ENCODE measurements at regions of chr13 and their contacts with region 1.

Region 1: DNA sequence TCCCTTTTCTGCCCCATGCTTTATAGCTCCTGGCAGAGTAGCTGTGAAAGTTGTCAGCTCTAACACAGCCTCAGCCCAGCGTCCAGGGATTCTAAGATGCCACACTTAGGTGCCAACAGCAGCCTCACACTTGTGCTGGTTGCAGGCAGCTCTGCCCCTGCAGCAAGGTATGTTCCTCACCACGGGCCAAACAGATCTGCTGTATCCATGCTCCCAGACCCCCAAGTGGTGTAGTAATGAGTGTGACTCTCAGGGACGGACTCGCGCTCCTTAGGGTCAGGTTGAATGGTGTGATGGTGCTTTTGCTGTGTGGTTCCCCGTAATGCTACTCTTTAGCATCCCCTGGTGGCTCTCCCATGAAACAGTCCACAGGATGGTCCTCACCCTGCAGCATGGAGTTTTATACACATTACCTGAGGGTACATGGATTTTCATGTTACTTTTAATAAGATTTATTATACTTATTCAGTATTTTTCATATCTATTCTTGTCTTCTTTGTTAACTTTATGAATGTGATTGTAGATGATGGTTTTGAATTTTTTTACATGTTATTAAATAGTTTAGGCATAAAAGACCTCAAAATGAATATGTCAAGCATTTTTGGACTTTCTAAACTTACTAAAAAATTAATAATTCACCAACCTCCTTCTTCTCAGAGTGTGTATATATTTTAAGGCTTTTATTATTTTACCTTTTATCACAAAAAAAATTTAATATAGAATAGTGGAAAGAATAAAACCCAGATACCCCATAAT is 232.5 kb downstream of the SLC7A1 start:
- DNase-seq: peak; percentile 49
- H3K4me3 Mint-ChIP-seq: no peak overlapping the region
- H3K27ac Mint-ChIP-seq: no peak overlapping the region
- H3K4me1 Mint-ChIP-seq: no peaks in the 10 kb centered on the region
- H3K27me3 Mint-ChIP-seq: peaks cover 8% of the 10 kb centered on the region

Region 2: DNA sequence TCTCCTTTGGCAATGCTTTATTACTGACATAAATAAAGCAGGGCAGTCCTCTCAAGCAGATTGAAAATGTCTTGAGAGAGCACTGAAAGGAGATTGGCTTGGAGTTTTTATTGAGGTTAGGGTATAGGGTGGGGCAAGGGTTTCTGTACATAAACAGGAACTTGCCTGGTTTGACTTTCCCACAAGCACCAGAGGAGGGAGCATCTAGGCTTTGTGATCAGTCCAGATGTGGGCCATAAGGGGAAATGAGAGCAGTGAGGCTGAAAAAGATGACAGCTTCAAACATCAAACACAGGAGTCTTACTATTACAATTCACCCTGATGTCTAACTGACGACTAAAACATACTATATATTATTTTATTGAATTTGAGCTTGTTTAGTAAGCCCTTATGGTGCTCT is 282.0 kb before region 1 on chr13:
- CTCF ChIA-PET with region 1: interaction called, 3 read pairs
- POLR2A ChIA-PET with region 1: no interaction called
- intact Hi-C with region 1: loop called (anchors 1 kb)
- DNase-seq: peak; percentile 38
- H3K4me3 Mint-ChIP-seq: no peak overlapping the region
- H3K27ac Mint-ChIP-seq: no peak overlapping the region
- H3K4me1 Mint-ChIP-seq: peaks cover 19% of the 10 kb centered on the region
- H3K27me3 Mint-ChIP-seq: no peaks in the 10 kb centered on the region